Brain microvascular endothelial cell (primary cell): ENCODE measurements at regions of chr5 and their contacts with region 1.

Region 1: DNA sequence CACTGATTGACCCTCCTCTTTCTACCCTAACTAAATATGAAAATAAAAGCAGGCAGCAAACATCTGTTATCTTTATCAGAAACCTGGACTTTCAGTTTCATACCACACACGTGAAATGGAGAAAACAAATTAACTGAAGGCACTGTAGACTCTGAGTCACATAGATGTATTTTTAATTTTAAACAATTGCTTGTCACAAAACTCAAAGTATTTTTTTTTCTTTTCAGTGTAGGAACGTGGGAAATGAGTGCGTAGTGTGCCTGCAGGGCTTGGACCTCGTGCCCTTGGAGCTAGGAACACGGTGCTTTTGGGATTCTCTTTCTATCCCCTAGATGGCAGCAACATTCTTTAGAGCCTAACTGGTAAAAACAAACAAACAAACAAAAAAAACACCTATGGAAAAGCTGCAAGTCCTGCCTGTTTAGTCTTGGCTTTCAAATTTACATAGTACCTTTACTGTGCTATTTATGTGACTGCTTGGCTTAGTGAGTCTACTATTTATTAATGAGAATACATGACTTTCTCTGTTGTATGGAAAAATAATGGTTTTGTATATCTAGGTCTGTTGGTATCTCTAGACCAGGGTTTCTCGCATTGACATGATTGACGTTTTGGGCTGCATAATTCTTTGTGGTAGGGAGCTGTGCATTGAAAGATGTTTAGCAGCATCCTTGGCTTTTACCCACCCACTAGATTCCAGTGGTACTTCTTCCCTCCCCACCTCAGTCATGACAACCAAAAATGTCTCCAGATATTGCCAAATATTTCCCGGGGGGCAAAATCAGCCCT is 16.8 kb upstream of the ACTBL2 start:
- DNase-seq: peak; percentile 70
- H3K4me3 ChIP-seq: no peak overlapping the region
- H3K27ac ChIP-seq: peak overlapping the region; percentile 71
- H3K27me3 ChIP-seq: no peaks in the 10 kb centered on the region
- CTCF ChIP-seq: peak; percentile 77

Region 2: GRCh38 chr5:57302164-57302563 is 197.3 kb before region 1 on chr5:
- in situ Hi-C with region 1: loop called (anchors 25 kb)
- DNase-seq: peak; percentile 79
- H3K4me3 ChIP-seq: no peak overlapping the region
- H3K27ac ChIP-seq: peak overlapping the region; percentile 44
- H3K27me3 ChIP-seq: no peaks in the 10 kb centered on the region
- CTCF ChIP-seq: peak; percentile 44

Region 3: GRCh38 chr5:57598756-57599155 is 99.3 kb after region 1 on chr5:
- in situ Hi-C with region 1: no loop called
- DNase-seq: peak; percentile 85
- H3K4me3 ChIP-seq: no peak overlapping the region
- H3K27ac ChIP-seq: no peak overlapping the region
- H3K27me3 ChIP-seq: no peaks in the 10 kb centered on the region
- CTCF ChIP-seq: no peak

Region 4: DNA sequence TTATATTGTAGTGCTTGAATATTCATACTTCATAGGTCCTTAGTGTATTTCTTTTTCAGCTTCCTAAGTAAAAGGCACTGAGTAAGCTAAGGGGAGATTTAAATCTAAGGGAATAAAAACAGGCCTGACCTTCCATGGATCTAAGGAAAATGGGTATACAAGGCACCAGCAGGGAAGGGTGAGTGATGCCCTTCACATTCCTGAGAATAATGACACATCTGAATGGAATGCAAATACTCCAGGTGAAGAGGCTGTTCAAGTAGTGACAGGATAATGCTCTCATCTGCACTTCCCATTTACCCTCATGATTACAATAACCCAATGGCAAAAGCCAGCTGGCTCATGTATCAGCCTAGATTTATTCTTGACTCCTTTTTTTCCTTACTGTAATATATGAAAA is 199.3 kb after region 1 on chr5:
- in situ Hi-C with region 1: no loop called
- DNase-seq: no peak
- H3K4me3 ChIP-seq: no peak overlapping the region
- H3K27ac ChIP-seq: no peak overlapping the region
- H3K27me3 ChIP-seq: no peaks in the 10 kb centered on the region
- CTCF ChIP-seq: no peak

Region 5: DNA sequence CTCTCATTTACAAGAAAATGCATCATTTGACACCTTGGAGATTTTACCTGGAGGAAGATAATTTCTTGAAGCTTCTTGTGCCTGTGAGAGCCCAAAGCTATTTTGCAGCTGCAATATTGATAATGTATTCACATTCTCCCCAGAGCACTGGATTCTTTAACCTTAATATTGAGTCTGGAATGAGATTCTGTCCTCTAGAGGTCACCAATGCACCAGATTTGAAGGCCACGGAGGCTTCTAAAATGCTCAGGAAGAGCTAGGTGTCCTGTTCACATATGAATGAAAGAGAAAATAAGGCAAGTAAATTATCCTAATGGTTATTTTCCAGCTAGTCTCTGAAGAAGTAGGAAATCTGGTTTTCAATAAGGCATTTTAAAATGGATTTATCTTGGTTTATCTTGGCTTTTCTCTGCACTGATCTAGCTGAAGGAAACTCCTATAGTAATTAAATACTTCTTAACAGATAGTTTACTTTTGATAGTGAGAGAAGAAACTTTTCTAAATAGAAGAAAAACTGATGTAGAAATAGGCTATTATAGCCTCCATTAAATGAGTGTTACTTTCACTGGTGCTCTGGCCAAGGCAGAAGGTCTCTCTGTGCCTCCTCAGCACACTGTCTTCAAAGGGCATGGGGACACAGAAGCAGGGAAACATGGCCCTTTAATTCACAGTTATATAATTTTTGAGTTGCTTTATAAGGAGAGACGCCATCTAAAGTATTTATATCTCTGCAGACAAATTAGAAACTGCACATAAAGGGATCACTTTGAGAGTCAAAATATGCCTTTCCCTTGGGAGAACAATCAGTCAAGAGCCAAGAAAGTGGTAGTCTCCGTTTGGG is 280.1 kb after region 1 on chr5:
- in situ Hi-C with region 1: loop called (anchors 25 kb)
- DNase-seq: peak; percentile 81
- H3K4me3 ChIP-seq: no peak overlapping the region
- H3K27ac ChIP-seq: peak overlapping the region; percentile 73
- H3K27me3 ChIP-seq: no peaks in the 10 kb centered on the region
- CTCF ChIP-seq: peak; percentile 68

Region 6: DNA sequence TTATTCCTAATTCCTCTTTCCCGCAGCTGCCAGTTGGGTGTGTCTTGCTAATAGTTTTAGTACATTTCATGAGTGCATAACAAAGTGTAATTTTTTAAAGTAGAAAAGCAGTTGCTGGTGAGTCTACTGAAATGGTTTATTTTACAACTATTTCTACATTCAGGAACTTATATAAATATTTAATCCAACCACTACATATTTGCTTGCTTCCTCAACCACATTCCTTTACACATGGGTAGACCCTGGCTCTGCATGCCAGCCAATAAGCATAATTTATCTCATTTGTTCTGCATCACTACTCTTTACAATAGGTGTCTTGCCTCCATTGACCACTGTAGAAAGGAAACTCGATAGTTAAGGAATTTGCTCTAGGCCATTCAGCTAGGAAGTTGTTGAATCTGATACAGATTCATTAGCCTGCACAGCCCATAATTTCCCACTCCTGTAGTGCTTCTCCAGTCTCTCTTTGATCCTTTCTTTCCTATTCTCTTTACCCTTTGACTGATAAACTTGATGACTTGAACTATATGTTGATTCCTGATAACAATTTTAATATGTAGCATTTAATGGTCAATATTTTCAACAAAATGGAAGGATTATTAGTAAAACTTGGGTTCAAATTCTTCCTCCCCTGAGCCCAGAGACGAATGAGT is 325.7 kb after region 1 on chr5:
- in situ Hi-C with region 1: no loop called
- DNase-seq: peak; percentile 58
- H3K4me3 ChIP-seq: no peak overlapping the region
- H3K27ac ChIP-seq: peak overlapping the region; percentile 72
- H3K27me3 ChIP-seq: no peaks in the 10 kb centered on the region
- CTCF ChIP-seq: no peak

Region 7: GRCh38 chr5:58042995-58043945 is 543.8 kb after region 1 on chr5:
- in situ Hi-C with region 1: no loop called
- DNase-seq: peak; percentile 58
- H3K4me3 ChIP-seq: no peak overlapping the region
- H3K27ac ChIP-seq: no peak overlapping the region
- H3K27me3 ChIP-seq: no peaks in the 10 kb centered on the region
- CTCF ChIP-seq: no peak

Region 8: GRCh38 chr5:58460732-58461286 is 961.4 kb after region 1 on chr5:
- in situ Hi-C with region 1: loop called (anchors 25 kb)
- DNase-seq: peak; percentile 80
- H3K4me3 ChIP-seq: peak overlapping the region; percentile 91
- H3K27ac ChIP-seq: peak overlapping the region; percentile 92
- H3K27me3 ChIP-seq: no peaks in the 10 kb centered on the region
- CTCF ChIP-seq: peak; percentile 89